HepG2 (cell line): ENCODE measurements at regions of chr4 and their contacts with region 1.

Region 1: DNA sequence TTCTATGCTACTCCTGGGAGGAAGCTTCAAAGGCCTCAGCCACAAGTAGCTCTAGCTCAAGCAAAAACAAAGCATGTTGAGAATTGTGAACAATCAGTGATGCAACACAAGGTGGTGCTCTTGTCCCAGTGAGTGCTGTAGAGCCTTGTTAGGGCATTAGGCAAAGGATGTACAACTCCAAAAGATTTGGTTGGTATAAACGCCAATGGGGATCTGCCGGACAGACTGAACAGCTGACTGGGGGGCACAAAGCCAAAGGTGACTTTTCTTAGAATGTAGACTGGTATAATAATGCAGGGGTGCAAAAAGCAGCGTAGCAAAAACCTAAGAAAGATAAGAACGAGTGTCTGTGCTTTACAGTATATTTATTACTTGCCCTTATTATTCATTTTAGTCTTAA is 62.6 kb upstream of the ALB start:
- DNase-seq: peak; percentile 85
- ATAC-seq: peak; percentile 83
- H3K4me3 ChIP-seq: peak overlapping the region; percentile 1 to 32 (median 17); a peak in 2 of 6 replicates
- H3K27ac ChIP-seq: peak overlapping the region; percentile 91
- H3K4me1 ChIP-seq: peaks cover 68% of the 10 kb centered on the region
- H3K27me3 ChIP-seq: no peaks in the 10 kb centered on the region
- CTCF ChIP-seq: peak; percentile 96
- EP300 ChIP-seq: no peak
- POLR2A ChIP-seq: no peak
- RAD21 ChIP-seq: peak; percentile 95

Region 2: DNA sequence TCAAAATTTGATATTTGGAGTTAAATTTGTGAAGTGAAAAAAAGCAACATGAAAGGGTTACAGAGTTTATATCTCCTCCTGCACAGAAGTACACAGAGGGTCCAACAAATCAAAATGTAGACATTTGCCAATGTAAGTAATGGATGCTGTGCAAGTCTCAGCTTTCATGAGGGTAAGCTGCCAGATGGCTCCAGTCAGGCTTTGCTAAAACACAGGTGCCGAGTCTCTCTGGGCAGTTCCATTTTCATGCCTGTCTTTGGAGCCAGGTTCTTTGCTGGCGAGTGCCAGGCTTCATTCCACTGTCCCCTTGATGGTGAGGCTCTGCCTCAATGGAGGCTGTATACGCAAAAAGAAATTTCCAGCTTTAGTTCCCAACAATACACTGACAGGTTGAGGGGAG is 1974.7 kb before region 1 on chr4:
- CTCF ChIA-PET with region 1: no interaction called
- POLR2A ChIA-PET with region 1: no interaction called
- in situ Hi-C with region 1: no loop called
- intact Hi-C with region 1: no loop called
- DNase-seq: no peak
- ATAC-seq: no peak
- H3K4me3 ChIP-seq: no peak overlapping the region
- H3K27ac ChIP-seq: no peak overlapping the region
- H3K4me1 ChIP-seq: no peaks in the 10 kb centered on the region
- H3K27me3 ChIP-seq: no peaks in the 10 kb centered on the region
- CTCF ChIP-seq: no peak
- EP300 ChIP-seq: no peak
- POLR2A ChIP-seq: no peak
- RAD21 ChIP-seq: no peak

Region 3: DNA sequence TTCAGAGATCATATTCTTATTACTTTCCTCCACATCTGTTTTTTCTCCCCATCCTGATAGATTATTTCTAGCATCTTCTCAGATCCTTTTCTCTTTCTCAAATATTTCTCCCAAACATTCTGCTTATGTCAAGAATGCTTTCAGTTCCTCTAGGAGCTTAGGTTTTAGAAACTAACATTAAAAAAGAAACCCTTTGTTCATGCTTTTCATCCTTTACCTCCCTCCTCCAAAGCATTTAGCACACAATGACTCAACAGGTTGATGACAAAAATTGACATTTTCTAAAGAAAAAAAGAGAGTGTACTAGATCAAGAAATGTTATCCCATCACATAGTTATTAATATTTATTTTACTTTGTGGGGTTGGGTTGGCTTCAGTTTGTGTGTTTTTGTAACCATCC is 46.1 kb after region 1 on chr4:
- CTCF ChIA-PET with region 1: no interaction called
- POLR2A ChIA-PET with region 1: no interaction called
- in situ Hi-C with region 1: no loop called
- intact Hi-C with region 1: loop called (anchors 5 kb)
- DNase-seq: no peak
- ATAC-seq: no peak
- H3K4me3 ChIP-seq: no peak overlapping the region
- H3K27ac ChIP-seq: peak overlapping the region; percentile 68
- H3K4me1 ChIP-seq: peaks cover 89% of the 10 kb centered on the region
- H3K27me3 ChIP-seq: no peaks in the 10 kb centered on the region
- CTCF ChIP-seq: no peak
- EP300 ChIP-seq: no peak
- POLR2A ChIP-seq: no peak
- RAD21 ChIP-seq: no peak

Region 4: GRCh38 chr4:73406548-73406875 is 65.1 kb after region 1 on chr4:
- CTCF ChIA-PET with region 1: interaction called, 3 read pairs
- POLR2A ChIA-PET with region 1: interaction called, 25 read pairs
- in situ Hi-C with region 1: loop called (anchors 5 kb)
- intact Hi-C with region 1: loop called (anchors 1 kb)
- DNase-seq: no peak
- ATAC-seq: no peak
- H3K4me3 ChIP-seq: peak overlapping the region; percentile 68 to 86 (median 71)
- H3K27ac ChIP-seq: peak overlapping the region; percentile 89
- H3K4me1 ChIP-seq: peaks cover 58% of the 10 kb centered on the region
- H3K27me3 ChIP-seq: no peaks in the 10 kb centered on the region
- CTCF ChIP-seq: no peak
- EP300 ChIP-seq: no peak
- POLR2A ChIP-seq: no peak; a peak in 1 of 4 replicates
- RAD21 ChIP-seq: no peak

Region 5: GRCh38 chr4:73417973-73418372 is 76.5 kb after region 1 on chr4:
- CTCF ChIA-PET with region 1: no interaction called
- POLR2A ChIA-PET with region 1: interaction called, 10 read pairs
- in situ Hi-C with region 1: no loop called
- intact Hi-C with region 1: loop called (anchors 2 kb)
- DNase-seq: no peak
- ATAC-seq: no peak
- H3K4me3 ChIP-seq: peak overlapping the region in 2 of 3 experiments; percentile 21 to 46; a peak in 4 of 6 replicates
- H3K27ac ChIP-seq: peak overlapping the region; percentile 89
- H3K4me1 ChIP-seq: peaks cover 46% of the 10 kb centered on the region
- H3K27me3 ChIP-seq: no peaks in the 10 kb centered on the region
- CTCF ChIP-seq: no peak
- EP300 ChIP-seq: no peak
- POLR2A ChIP-seq: peak in 1 of 2 experiments; percentile 74; a peak in 2 of 4 replicates
- RAD21 ChIP-seq: no peak

Region 6: GRCh38 chr4:73446336-73446938 is 105.0 kb after region 1 on chr4:
- CTCF ChIA-PET with region 1: interaction called, 138 read pairs
- POLR2A ChIA-PET with region 1: interaction called, 17 read pairs
- in situ Hi-C with region 1: loop called (anchors 5 kb)
- intact Hi-C with region 1: loop called (anchors 1 kb)
- DNase-seq: peak; percentile 78
- ATAC-seq: peak; percentile 64
- H3K4me3 ChIP-seq: no peak overlapping the region; a peak in 1 of 6 replicates
- H3K27ac ChIP-seq: peak overlapping the region; percentile 38
- H3K4me1 ChIP-seq: peaks cover 82% of the 10 kb centered on the region
- H3K27me3 ChIP-seq: no peaks in the 10 kb centered on the region
- CTCF ChIP-seq: peak; percentile 75
- EP300 ChIP-seq: no peak
- POLR2A ChIP-seq: peak in 1 of 2 experiments; percentile 39; a peak in 2 of 4 replicates
- RAD21 ChIP-seq: peak; percentile 75

Region 7: GRCh38 chr4:73593631-73594241 is 252.3 kb after region 1 on chr4:
- CTCF ChIA-PET with region 1: no interaction called
- POLR2A ChIA-PET with region 1: no interaction called
- in situ Hi-C with region 1: loop called (anchors 25 kb)
- intact Hi-C with region 1: no loop called
- DNase-seq: peak; percentile 39
- ATAC-seq: no peak
- H3K4me3 ChIP-seq: no peak overlapping the region
- H3K27ac ChIP-seq: no peak overlapping the region
- H3K4me1 ChIP-seq: peaks cover 41% of the 10 kb centered on the region
- H3K27me3 ChIP-seq: no peaks in the 10 kb centered on the region
- CTCF ChIP-seq: peak; percentile 58
- EP300 ChIP-seq: no peak
- POLR2A ChIP-seq: no peak
- RAD21 ChIP-seq: peak; percentile 45; the same call in 1 of the 2 replicates